HepG2 (cell line): ENCODE measurements at regions of chr1 and their contacts with region 1.

Region 1: DNA sequence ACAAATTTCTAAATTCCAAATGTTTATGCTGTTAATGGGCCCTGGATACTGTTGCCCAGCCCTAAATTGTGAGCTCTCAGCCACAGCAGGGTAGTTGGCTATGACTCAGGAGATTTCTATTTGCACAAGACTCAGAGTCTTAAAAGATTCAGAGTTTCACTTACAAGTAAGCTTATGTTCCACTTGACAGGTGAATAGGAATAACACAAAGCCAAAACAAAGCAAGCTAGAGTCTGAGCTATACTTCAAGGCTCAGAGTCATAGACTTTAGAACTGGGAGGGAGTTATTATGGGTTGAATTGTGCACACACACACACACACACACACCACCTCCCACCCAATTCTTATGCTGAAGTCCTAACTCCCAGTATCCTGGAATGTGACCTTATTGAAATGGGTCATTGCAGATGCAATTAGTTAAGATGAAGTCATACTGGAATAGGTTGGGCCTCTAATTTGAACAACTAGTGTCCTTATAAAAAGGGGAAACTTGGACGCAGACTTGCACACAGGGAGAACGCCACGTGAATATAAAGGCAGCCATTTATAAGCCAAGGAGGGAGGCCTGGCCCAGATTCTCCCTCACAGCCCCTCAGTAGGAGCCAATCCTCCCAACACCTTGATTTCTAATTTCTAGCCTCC is 30.2 kb downstream of the PRDX6 start:
- DNase-seq: no peak
- ATAC-seq: no peak
- H3K4me3 ChIP-seq: no peak overlapping the region
- H3K27ac ChIP-seq: no peak overlapping the region
- H3K4me1 ChIP-seq: peaks cover 20% of the 10 kb centered on the region
- H3K27me3 ChIP-seq: no peaks in the 10 kb centered on the region
- CTCF ChIP-seq: no peak
- EP300 ChIP-seq: no peak
- POLR2A ChIP-seq: no peak
- RAD21 ChIP-seq: no peak

Region 2: GRCh38 chr1:173420330-173420806 is 87.0 kb before region 1 on chr1:
- CTCF ChIA-PET with region 1: interaction called, 10 read pairs
- POLR2A ChIA-PET with region 1: no interaction called
- in situ Hi-C with region 1: no loop called
- intact Hi-C with region 1: loop called (anchors 1 kb)
- DNase-seq: peak; percentile 64
- ATAC-seq: peak; percentile 90
- H3K4me3 ChIP-seq: no peak overlapping the region
- H3K27ac ChIP-seq: no peak overlapping the region
- H3K4me1 ChIP-seq: no peaks in the 10 kb centered on the region
- H3K27me3 ChIP-seq: no peaks in the 10 kb centered on the region
- CTCF ChIP-seq: peak; percentile 83
- EP300 ChIP-seq: no peak
- POLR2A ChIP-seq: no peak
- RAD21 ChIP-seq: peak; percentile 77